Caco-2 (cell line): ENCODE measurements at regions of chr7 and their contacts with region 1.

Region 1: GRCh38 chr7:147412782-147413556 is 1177.6 kb upstream of the C7orf33 start:
- DNase-seq: peak in 1 of 2 experiments; percentile 50
- H3K4me3 ChIP-seq: no peak overlapping the region
- H3K4me3 Mint-ChIP-seq: peak overlapping the region; percentile 45
- H3K27ac Mint-ChIP-seq: peak overlapping the region; percentile 73
- H3K4me1 ChIP-seq: peaks cover 27% of the 10 kb centered on the region
- H3K4me1 Mint-ChIP-seq: peaks cover 15% of the 10 kb centered on the region
- H3K27me3 ChIP-seq: no peaks in the 10 kb centered on the region
- H3K27me3 Mint-ChIP-seq: no peaks in the 10 kb centered on the region
- CTCF ChIP-seq: no peak

Region 2: GRCh38 chr7:146937836-146938235 is 475.1 kb before region 1 on chr7:
- CTCF ChIA-PET with region 1: no interaction called
- POLR2A ChIA-PET with region 1: no interaction called
- intact Hi-C with region 1: loop called (anchors 1 kb)
- DNase-seq: peak in 1 of 2 experiments; percentile 58
- H3K4me3 ChIP-seq: no peak overlapping the region
- H3K4me3 Mint-ChIP-seq: peak overlapping the region; percentile 27
- H3K27ac Mint-ChIP-seq: peak overlapping the region; percentile 61
- H3K4me1 ChIP-seq: peaks cover 39% of the 10 kb centered on the region
- H3K4me1 Mint-ChIP-seq: peaks cover 8% of the 10 kb centered on the region
- H3K27me3 ChIP-seq: no peaks in the 10 kb centered on the region
- H3K27me3 Mint-ChIP-seq: no peaks in the 10 kb centered on the region
- CTCF ChIP-seq: no peak

Region 3: GRCh38 chr7:147276783-147277370 is 136.1 kb before region 1 on chr7:
- CTCF ChIA-PET with region 1: no interaction called
- POLR2A ChIA-PET with region 1: no interaction called
- intact Hi-C with region 1: no loop called
- DNase-seq: no peak
- H3K4me3 ChIP-seq: no peak overlapping the region
- H3K4me3 Mint-ChIP-seq: no peak overlapping the region
- H3K27ac Mint-ChIP-seq: no peak overlapping the region
- H3K4me1 ChIP-seq: no peaks in the 10 kb centered on the region
- H3K4me1 Mint-ChIP-seq: no peaks in the 10 kb centered on the region
- H3K27me3 ChIP-seq: no peaks in the 10 kb centered on the region
- H3K27me3 Mint-ChIP-seq: no peaks in the 10 kb centered on the region
- CTCF ChIP-seq: no peak

Region 4: DNA sequence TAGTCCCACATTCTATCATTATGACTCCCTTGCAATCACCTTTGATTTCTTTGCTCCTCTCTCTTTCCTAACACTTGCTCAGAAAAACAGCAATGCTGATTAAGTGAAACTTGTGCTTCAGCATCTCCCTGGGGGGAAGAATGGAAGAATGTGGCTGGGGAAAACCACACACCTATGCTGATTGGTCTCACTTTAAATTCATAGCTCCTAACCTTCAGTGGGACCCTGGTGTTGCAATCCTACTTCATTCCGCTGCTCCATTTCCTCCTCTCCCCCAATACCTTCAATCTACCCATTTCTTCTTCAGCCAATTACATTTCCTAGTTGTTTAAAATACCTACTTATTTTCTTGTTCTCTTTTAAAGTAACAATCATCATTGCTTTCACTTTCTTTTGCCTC is 10.9 kb after region 1 on chr7:
- CTCF ChIA-PET with region 1: no interaction called
- POLR2A ChIA-PET with region 1: no interaction called
- intact Hi-C with region 1: loop called (anchors 1 kb)
- DNase-seq: no peak
- H3K4me3 ChIP-seq: no peak overlapping the region
- H3K4me3 Mint-ChIP-seq: no peak overlapping the region
- H3K27ac Mint-ChIP-seq: no peak overlapping the region
- H3K4me1 ChIP-seq: peaks cover 22% of the 10 kb centered on the region
- H3K4me1 Mint-ChIP-seq: peaks cover 8% of the 10 kb centered on the region
- H3K27me3 ChIP-seq: no peaks in the 10 kb centered on the region
- H3K27me3 Mint-ChIP-seq: no peaks in the 10 kb centered on the region
- CTCF ChIP-seq: no peak

Region 5: DNA sequence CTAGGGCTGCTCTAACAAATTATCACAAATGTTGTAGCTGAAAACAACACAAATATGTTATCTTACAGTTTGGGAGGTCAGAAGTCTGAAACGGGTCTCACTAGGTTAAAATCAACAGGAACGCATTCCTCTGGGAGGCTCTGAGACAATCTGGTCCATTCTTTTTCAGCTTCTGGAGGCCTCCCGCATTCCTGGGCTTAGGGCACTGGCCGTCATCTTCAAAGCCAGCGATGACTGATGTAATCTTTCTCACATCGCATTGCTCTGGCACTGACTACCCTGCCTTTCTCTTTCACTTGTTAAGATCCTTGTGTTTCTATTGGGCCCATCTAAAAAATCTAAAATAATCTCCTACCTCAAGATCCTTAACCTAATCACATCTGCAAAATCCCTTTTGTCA is 106.1 kb after region 1 on chr7:
- CTCF ChIA-PET with region 1: interaction called, 3 read pairs
- POLR2A ChIA-PET with region 1: no interaction called
- intact Hi-C with region 1: loop called (anchors 1 kb)
- DNase-seq: peak; percentile 78 to 82
- H3K4me3 ChIP-seq: no peak overlapping the region
- H3K4me3 Mint-ChIP-seq: peak overlapping the region; percentile 34
- H3K27ac Mint-ChIP-seq: peak overlapping the region; percentile 90
- H3K4me1 ChIP-seq: peaks cover 24% of the 10 kb centered on the region
- H3K4me1 Mint-ChIP-seq: peaks cover 7% of the 10 kb centered on the region
- H3K27me3 ChIP-seq: no peaks in the 10 kb centered on the region
- H3K27me3 Mint-ChIP-seq: no peaks in the 10 kb centered on the region
- CTCF ChIP-seq: no peak